ENCODE measurements at regions of chr3 and their contacts with region 1.

Region 1: GRCh38 chr3:58305882-58306711 is at the starts of genes HTD2 and RPP14:
- DNase-seq: peak; percentile 95
- H3K4me3 ChIP-seq: peak within 1 kb of the TSS; percentile 76 to 94
- H3K27ac ChIP-seq: peak within 1 kb of the TSS; percentile 93 to 94
- H3K4me1 ChIP-seq: peaks cover 8 to 14% of the 10 kb centered on the region in 2 experiments; a peak in 3 of 4 replicates
- H3K27me3 ChIP-seq: no peaks in the 10 kb centered on the region; the same call in 1 of the 2 replicates
- CTCF ChIP-seq: peak; percentile 95
- EP300 ChIP-seq: no peak; a peak in 1 of 4 replicates
- RAD21 ChIP-seq: peak; percentile 38
- polyA plus RNA-seq, gene HTD2: 3.0 and 5.2 TPM in 2 replicates
- polyA plus RNA-seq, gene RPP14: 8.3 and 9.7 TPM in 2 replicates

Region 2: GRCh38 chr3:58177747-58178527 is 128.2 kb before region 1 on chr3:
- CTCF ChIA-PET with region 1: interaction called, 60 read pairs
- POLR2A ChIA-PET with region 1: no interaction called
- DNase-seq: peak; percentile 93
- H3K4me3 ChIP-seq: peak overlapping the region; percentile 41 to 56
- H3K27ac ChIP-seq: no peak overlapping the region
- H3K4me1 ChIP-seq: peaks cover 0 to 4% of the 10 kb centered on the region in 2 experiments; a peak in 1 of 4 replicates
- H3K27me3 ChIP-seq: no peaks in the 10 kb centered on the region
- CTCF ChIP-seq: peak; percentile 89
- EP300 ChIP-seq: no peak
- RAD21 ChIP-seq: peak; percentile 78

Region 3: DNA sequence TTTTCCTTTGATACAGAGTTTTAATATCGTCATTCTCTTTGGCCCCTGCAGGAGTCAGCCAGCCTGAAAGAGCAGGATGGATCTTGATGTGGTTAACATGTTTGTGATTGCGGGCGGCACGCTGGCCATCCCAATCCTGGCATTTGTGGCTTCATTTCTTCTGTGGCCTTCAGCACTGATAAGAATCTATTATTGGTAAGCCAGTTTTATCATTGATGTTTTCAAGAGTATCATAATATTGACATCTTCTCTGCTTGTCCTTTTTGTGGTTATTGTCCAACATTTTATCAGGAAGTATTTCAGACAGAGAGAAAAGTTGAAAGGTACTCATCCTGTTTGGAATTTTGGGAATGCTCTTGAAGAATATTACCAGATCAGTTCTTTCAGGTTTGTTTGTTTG is 49.6 kb before region 1 on chr3:
- CTCF ChIA-PET with region 1: no interaction called
- POLR2A ChIA-PET with region 1: no interaction called
- DNase-seq: no peak
- H3K4me3 ChIP-seq: no peak overlapping the region
- H3K27ac ChIP-seq: no peak overlapping the region
- H3K4me1 ChIP-seq: peaks cover 0 to 13% of the 10 kb centered on the region in 2 experiments; a peak in 3 of 4 replicates
- H3K27me3 ChIP-seq: no peaks in the 10 kb centered on the region
- CTCF ChIP-seq: no peak
- EP300 ChIP-seq: no peak
- RAD21 ChIP-seq: no peak

Region 4: DNA sequence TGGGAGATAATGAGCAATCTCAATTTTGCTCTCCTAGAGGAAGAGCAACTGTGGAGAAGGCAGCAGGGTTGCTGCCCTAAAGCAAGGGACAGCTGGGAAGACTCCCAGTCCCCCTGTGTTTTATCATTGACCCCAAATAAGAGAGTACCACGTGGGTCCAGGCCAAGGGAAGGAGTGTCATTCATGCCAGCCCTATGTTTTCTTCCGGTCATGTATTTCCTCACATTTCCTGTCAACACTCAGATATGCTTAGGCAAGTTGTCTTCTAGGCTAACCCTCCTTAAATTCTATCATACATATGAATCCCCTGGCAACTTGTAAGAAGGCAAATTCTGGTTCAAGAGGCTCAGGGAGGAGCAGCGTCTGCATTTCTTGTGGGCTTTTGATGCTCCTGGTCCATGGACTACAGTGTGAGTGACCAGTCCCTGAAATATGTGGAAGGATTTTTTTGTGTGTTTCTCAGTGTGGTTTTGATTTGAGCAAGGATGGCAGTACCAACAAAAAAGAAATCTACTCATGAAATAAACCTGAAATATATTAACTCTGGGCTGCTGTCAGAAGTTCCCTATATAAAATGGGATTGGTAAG is 32.0 kb before region 1 on chr3:
- CTCF ChIA-PET with region 1: no interaction called
- POLR2A ChIA-PET with region 1: no interaction called
- DNase-seq: no peak
- H3K4me3 ChIP-seq: no peak overlapping the region
- H3K27ac ChIP-seq: peak overlapping the region in 1 of 2 experiments; percentile 11; a peak in 1 of 4 replicates
- H3K4me1 ChIP-seq: peaks cover 0 to 7% of the 10 kb centered on the region in 2 experiments; a peak in 1 of 4 replicates
- H3K27me3 ChIP-seq: no peaks in the 10 kb centered on the region
- CTCF ChIP-seq: no peak
- EP300 ChIP-seq: no peak
- RAD21 ChIP-seq: no peak

Region 5: DNA sequence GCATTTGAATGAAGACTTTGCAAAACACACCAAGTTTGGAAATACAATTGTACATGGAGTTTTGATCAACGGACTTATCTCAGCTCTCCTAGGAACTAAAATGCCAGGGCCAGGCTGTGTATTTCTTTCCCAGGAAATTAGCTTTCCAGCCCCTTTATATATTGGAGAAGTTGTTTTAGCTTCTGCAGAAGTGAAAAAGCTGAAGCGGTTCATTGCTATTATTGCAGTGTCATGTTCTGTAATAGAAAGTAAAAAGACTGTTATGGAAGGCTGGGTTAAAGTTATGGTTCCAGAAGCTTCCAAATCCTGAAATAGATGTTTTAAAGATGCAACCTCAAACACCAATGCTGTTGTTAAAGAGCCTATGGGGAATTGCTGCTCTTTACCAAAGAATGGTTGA is 11.7 kb after region 1 on chr3:
- CTCF ChIA-PET with region 1: interaction called, 25 read pairs
- POLR2A ChIA-PET with region 1: no interaction called
- DNase-seq: no peak
- H3K4me3 ChIP-seq: no peak overlapping the region
- H3K27ac ChIP-seq: no peak overlapping the region
- H3K4me1 ChIP-seq: no peaks in the 10 kb centered on the region
- H3K27me3 ChIP-seq: no peaks in the 10 kb centered on the region
- CTCF ChIP-seq: no peak
- EP300 ChIP-seq: no peak
- RAD21 ChIP-seq: no peak

Region 6: DNA sequence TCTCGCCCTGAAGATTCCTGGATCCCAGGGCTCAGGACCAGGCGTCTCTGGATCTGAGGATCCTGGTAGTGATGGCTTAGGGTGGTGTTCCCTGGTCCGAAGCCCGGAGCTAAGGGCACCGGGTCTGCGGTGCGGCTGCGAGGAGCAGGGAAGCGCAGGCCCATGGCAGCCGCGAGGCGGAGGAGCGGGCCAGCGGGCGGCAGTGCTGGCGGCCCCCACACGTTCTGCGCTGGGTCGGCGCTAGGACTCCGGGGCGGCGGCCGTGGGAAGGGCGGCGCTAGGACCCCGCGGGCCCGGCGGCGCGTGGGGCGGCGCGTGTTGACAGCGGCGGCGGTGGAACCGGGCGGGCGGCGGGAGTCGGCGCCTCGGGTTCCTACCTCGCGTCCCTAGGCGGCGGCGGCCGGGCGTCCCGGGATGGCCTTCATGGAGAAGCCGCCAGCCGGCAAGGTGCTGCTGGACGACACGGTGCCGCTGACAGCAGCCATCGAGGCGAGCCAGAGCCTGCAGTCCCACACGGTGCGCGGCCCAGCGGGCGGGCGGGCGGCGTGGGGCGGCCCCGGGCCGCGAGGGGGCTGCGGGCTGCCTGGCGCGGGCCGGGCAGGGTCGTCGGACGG is 26.6 kb after region 1 on chr3 and contains the start of gene PXK:
- CTCF ChIA-PET with region 1: interaction called, 18 read pairs
- POLR2A ChIA-PET with region 1: interaction called, 5 read pairs
- DNase-seq: peak; percentile 94
- H3K4me3 ChIP-seq: peak within 1 kb of the TSS; percentile 67 to 83
- H3K27ac ChIP-seq: peak within 1 kb of the TSS; percentile 7 to 88; a peak in 2 of 4 replicates
- H3K4me1 ChIP-seq: peaks cover 4 to 11% of the 10 kb centered on the region in 2 experiments; a peak in 3 of 4 replicates
- H3K27me3 ChIP-seq: no peaks in the 10 kb centered on the region
- CTCF ChIP-seq: peak; percentile 21
- EP300 ChIP-seq: peak in 1 of 2 experiments; percentile 37; a peak in 1 of 4 replicates
- RAD21 ChIP-seq: peak; percentile 33; the same call in 1 of the 2 replicates
- polyA plus RNA-seq, gene PXK: 8.4 and 9.3 TPM in 2 replicates

Region 7: DNA sequence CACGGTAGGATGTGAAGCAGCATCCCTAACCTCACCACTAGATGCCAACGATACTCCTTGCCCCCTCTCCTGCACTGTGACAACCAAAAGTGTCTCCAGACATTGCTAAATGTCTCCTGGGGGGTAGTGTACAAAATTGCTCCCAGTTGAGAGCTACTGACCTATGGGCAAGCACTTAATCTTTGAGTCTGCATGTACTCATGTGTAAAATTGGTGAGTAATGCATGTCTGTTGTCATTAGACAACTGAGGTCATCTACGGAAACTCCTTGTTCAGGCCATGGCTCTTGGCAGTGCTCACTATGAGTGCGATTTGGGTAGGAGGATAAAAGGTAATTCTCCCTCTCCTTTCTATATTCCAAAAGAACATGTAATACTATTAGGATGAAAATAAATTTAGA is 98.3 kb after region 1 on chr3:
- CTCF ChIA-PET with region 1: interaction called, 15 read pairs
- POLR2A ChIA-PET with region 1: no interaction called
- DNase-seq: no peak
- H3K4me3 ChIP-seq: no peak overlapping the region
- H3K27ac ChIP-seq: 0 out of 4 replicates have a peak overlapping the region, but pooled peaks of 1 of the 2 experiments have one; percentile 1
- H3K4me1 ChIP-seq: no peaks in the 10 kb centered on the region
- H3K27me3 ChIP-seq: no peaks in the 10 kb centered on the region
- CTCF ChIP-seq: no peak
- EP300 ChIP-seq: no peak
- RAD21 ChIP-seq: no peak

Region 8: DNA sequence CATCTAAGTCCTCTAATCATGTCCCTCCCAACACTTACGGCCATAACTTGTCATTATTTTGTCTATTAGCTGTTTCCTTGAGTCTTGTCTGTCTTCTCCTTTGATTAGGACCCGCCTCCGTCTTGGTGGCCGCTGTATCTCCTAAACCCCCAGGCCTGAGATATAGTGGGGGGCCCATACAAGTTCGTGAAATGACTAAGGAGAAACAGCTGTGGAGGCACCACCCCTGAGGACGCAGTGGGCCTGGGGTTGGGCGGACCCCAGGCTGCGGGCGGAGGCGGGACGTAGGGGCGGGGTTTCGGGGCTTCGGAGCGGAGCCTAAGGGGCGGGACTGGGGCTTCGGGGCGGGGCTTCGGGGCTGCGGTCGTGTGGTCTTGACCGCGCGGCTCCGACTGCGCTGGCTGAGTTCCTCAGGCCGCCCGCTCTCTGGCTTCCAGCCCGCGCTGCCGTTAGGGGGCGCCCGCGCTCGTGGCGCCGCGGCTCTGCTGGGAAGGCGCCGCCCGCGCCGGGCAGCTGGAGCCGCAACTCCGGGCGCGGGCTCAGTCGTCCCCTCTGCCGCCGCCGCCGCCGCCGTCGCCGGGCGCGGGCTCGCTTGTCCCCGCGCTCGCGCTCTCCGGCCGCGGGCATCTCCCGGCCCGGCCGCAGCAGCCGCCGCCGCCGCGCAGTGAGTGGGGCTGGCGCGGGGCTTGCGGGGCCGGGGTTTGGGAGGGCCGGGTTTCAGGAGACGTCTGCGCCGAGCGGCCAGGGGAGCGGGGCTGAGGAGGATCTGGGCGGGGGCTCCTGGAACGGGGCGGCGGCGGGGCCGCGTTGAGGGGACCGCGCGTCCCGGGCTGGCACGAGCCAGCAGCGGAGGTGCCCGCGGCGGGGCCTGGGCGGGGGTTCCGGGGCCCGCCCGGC is 185.7 kb after region 1 on chr3 and contains the start of gene KCTD6:
- CTCF ChIA-PET with region 1: interaction called, 12 read pairs
- POLR2A ChIA-PET with region 1: interaction called, 3 read pairs
- DNase-seq: peak; percentile 97
- H3K4me3 ChIP-seq: peak within 1 kb of the TSS; percentile 84
- H3K27ac ChIP-seq: peak within 1 kb of the TSS; percentile 21 to 85; a peak in 3 of 4 replicates
- H3K4me1 ChIP-seq: peaks cover 24 to 27% of the 10 kb centered on the region in 2 experiments
- H3K27me3 ChIP-seq: no peaks in the 10 kb centered on the region
- CTCF ChIP-seq: peak; percentile 57
- EP300 ChIP-seq: no peak; a peak in 1 of 4 replicates
- RAD21 ChIP-seq: peak; percentile 64
- polyA plus RNA-seq, gene KCTD6: 7.8 and 10.1 TPM in 2 replicates